CD4-positive, alpha-beta memory T cell (primary cell): ENCODE measurements at regions of chr1 and their contacts with region 1.

Region 1: DNA sequence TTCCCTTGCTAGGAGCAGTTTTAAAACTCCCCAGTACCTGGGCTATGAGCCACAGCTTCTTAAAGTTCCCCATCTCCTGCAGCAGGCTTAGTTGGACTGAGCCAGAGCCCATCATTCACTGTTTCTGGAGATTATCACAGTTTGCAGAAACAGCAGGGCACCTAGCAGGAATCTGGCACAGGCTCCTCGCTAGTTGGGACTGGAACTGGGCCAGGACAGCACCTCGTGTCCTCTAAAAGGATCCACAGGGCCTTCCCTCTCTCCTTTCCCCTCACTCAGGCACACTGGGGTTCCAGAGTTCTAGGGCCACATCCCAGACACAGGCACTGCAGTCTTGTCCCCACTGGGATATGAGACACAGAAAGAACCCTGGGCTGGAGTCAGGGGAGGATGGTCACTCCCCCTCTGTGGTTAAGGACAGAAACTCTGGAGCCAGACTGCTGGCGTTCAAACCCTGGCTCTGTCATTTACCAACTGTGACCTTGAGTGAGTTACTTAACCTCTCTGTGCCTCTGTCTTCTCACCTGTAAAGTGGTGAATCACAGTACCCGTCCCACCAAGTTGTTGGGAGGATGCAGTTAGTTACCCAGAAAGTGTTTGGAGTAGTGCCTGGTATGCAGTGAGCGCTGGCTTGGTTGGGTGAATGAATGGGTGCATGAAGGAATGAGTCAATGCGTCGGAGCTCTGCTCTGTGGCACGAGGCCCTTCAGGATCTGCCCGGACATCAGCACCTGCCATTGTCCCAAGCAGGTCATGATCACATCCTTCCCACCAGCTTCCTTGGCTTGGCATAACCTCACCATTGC is 18.8 kb upstream of the ECE1 start:
- DNase-seq: no peak
- H3K4me3 ChIP-seq: no peak overlapping the region
- H3K4me3 Mint-ChIP-seq: peak overlapping the region in 1 of 8 donors; percentile 30
- H3K27ac ChIP-seq: no peak overlapping the region
- H3K27ac Mint-ChIP-seq: peak overlapping the region in 6 of 7 donors; percentile 52 to 76 (median 70)
- H3K4me1 ChIP-seq: peaks cover 69% of the 10 kb centered on the region
- H3K4me1 Mint-ChIP-seq: peaks cover 46 to 74% (median 62%) of the 10 kb centered on the region in 4 donors
- H3K27me3 ChIP-seq: no peaks in the 10 kb centered on the region
- H3K27me3 Mint-ChIP-seq: no peaks in the 10 kb centered on the region

Region 2: GRCh38 chr1:21324368-21325141 is 15.5 kb after region 1 on chr1:
- CTCF ChIA-PET with region 1: interaction called, 25 read pairs
- POLR2A ChIA-PET with region 1: interaction called, 35 read pairs
- intact Hi-C with region 1: no loop called
- DNase-seq: peak; percentile 24 to 82 (median 48)
- H3K4me3 ChIP-seq: peak overlapping the region; percentile 9 to 25
- H3K4me3 Mint-ChIP-seq: peak overlapping the region; percentile 65 to 93 (median 84)
- H3K27ac ChIP-seq: peak overlapping the region; percentile 36
- H3K27ac Mint-ChIP-seq: peak overlapping the region; percentile 92 to 96 (median 94)
- H3K4me1 ChIP-seq: peaks cover 71% of the 10 kb centered on the region
- H3K4me1 Mint-ChIP-seq: peaks cover 41 to 95% (median 75%) of the 10 kb centered on the region in 4 donors
- H3K27me3 ChIP-seq: no peaks in the 10 kb centered on the region
- H3K27me3 Mint-ChIP-seq: no peaks in the 10 kb centered on the region

Region 3: GRCh38 chr1:21439721-21440629 is 130.9 kb after region 1 on chr1 and contains the start of gene NBPF3:
- CTCF ChIA-PET with region 1: no interaction called
- POLR2A ChIA-PET with region 1: no interaction called
- intact Hi-C with region 1: no loop called
- DNase-seq: peak; percentile 67 to 90 (median 69)
- H3K4me3 ChIP-seq: peak within 1 kb of the TSS; percentile 57 to 73
- H3K4me3 Mint-ChIP-seq: peak within 1 kb of the TSS; percentile 87 to 97 (median 92)
- H3K27ac ChIP-seq: peak within 1 kb of the TSS; percentile 49
- H3K27ac Mint-ChIP-seq: peak within 1 kb of the TSS; percentile 75 to 96 (median 88)
- H3K4me1 ChIP-seq: peaks cover 8% of the 10 kb centered on the region
- H3K4me1 Mint-ChIP-seq: peaks cover 7 to 28% (median 15%) of the 10 kb centered on the region in 4 donors
- H3K27me3 ChIP-seq: no peaks in the 10 kb centered on the region
- H3K27me3 Mint-ChIP-seq: peaks cover 0 to 4% of the 10 kb centered on the region in 2 donors
- total RNA-seq, gene NBPF3: 14.3 TPM